ENCODE measurements at regions of chr15 and their contacts with region 1.

Region 1: DNA sequence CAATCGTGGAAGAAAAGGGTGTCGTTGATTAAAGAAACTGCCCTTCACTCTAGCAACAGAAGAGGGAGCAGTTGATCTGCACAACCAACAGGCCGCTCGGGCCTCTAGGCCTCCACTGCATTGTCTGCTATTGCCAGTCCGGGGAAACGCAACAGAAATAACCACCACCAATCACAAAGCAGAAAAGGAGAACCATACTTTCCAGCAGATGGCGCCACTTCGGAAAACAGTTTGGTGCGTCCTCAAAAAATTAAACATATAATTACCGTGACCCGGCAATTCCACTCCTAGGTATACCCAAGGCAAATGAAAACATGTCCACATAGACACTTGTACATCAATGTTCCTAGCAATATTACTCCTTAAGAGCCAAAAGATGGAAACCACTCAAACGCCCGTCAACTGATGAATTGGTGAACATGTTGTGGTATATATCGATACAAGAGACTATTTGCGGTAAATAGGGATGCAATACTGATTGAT is 154.1 kb downstream of the TJP1 start:
- DNase-seq: peak; percentile 86 to 97
- ATAC-seq: peak; percentile 61 to 74
- H3K4me3 ChIP-seq: no peak overlapping the region
- H3K27ac ChIP-seq: peak overlapping the region; percentile 91 to 93
- H3K4me1 ChIP-seq: peaks cover 38% of the 10 kb centered on the region
- CTCF ChIP-seq: peak; percentile 100
- EP300 ChIP-seq: no peak
- POLR2A ChIP-seq: no peak
- RAD21 ChIP-seq: peak; percentile 99

Region 2: GRCh38 chr15:29596266-29596665 is 71.9 kb before region 1 on chr15:
- CTCF ChIA-PET with region 1: no interaction called
- POLR2A ChIA-PET with region 1: no interaction called
- DNase-seq: no peak
- ATAC-seq: no peak
- H3K4me3 ChIP-seq: no peak overlapping the region
- H3K27ac ChIP-seq: no peak overlapping the region
- H3K4me1 ChIP-seq: no peaks in the 10 kb centered on the region
- CTCF ChIP-seq: no peak
- EP300 ChIP-seq: no peak
- POLR2A ChIP-seq: no peak
- RAD21 ChIP-seq: no peak

Region 3: DNA sequence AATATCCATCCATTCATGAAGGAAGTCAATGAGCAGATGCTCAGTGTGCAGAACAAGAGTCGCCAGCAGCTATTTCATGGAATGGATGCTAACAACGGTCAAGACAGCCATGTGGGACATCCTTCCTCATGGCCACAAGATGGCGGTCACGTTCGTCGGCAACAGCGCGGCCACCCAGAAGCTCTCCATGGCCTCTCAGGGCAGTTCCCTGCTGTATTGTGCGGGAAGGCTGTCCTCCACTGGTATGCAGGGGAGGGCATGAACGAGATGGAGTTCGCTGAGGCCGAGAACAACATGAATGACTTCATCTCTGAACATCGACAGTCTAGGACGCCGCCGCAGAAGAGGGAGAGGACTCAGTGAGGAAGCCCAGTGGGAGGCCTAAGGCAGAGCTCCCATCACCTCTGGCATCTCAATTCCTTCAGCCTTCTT is 54.2 kb before region 1 on chr15:
- CTCF ChIA-PET with region 1: interaction called, 11 read pairs
- POLR2A ChIA-PET with region 1: no interaction called
- DNase-seq: peak; percentile 78 to 87
- ATAC-seq: peak; percentile 95 to 98
- H3K4me3 ChIP-seq: no peak overlapping the region
- H3K27ac ChIP-seq: peak overlapping the region in 1 of 2 experiments; percentile 27; a peak in 1 of 6 replicates
- H3K4me1 ChIP-seq: peaks cover 9% of the 10 kb centered on the region; the same call in 2 of the 3 replicates
- CTCF ChIP-seq: peak; percentile 72
- EP300 ChIP-seq: no peak
- POLR2A ChIP-seq: no peak
- RAD21 ChIP-seq: peak; percentile 81 to 86

Region 4: DNA sequence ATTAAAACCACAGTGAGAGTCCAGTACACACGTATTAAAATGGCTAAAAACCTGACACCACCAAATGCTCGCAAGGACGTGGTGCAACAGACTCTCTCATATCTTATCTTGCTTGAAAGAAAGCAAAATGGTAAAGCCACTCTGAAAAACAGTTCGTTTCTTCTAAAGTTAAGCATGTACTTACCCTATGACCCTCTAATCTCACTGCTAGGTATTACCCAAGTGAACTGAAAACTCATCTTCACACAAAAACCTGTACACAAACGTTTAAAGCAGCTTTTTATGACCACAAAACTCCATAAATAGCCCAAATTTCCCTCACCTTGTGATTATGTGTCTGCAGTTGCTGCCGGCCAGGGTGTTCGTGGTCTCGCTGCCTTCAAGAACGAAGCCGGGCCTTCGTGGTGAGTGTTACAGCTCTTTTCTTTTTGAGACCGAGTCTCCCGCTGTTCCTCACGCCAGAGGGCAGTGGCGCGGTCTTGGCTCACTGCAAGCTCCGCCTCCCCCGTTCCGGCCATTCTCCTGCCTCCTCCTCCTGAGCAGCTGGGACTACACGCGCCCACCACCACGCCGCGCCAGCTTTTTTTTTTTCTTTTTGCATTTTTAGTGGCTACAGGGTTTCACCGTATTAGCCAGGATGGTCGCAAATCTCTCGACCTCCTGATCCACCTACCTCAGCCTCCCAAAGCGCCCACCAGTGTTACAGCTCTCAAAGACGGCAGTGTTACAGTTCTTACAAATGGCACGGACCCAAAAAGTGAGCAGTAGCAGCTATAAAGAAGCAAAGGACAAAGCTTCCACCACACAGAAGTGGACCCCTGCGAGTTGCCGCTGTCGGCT is 11.3 kb before region 1 on chr15:
- CTCF ChIA-PET with region 1: interaction called, 11 read pairs
- POLR2A ChIA-PET with region 1: no interaction called
- DNase-seq: peak; percentile 52 to 87
- ATAC-seq: peak; percentile 97 to 99
- H3K4me3 ChIP-seq: peak overlapping the region; percentile 50
- H3K27ac ChIP-seq: peak overlapping the region; percentile 67 to 81
- H3K4me1 ChIP-seq: no peaks in the 10 kb centered on the region
- CTCF ChIP-seq: peak; percentile 48
- EP300 ChIP-seq: no peak
- POLR2A ChIP-seq: peak; percentile 17; the same call in 1 of the 2 replicates
- RAD21 ChIP-seq: peak; percentile 13 to 42; a peak in 1 of 5 replicates

Region 5: GRCh38 chr15:29740692-29741311 is 72.6 kb after region 1 on chr15:
- CTCF ChIA-PET with region 1: interaction called, 68 read pairs
- POLR2A ChIA-PET with region 1: interaction called, 7 read pairs
- DNase-seq: peak in 1 of 2 experiments; percentile 61
- ATAC-seq: peak; percentile 47 to 60; a peak in 3 of 6 replicates
- H3K4me3 ChIP-seq: no peak overlapping the region
- H3K27ac ChIP-seq: peak overlapping the region; percentile 22 to 86; a peak in 4 of 6 replicates
- H3K4me1 ChIP-seq: peaks cover 39% of the 10 kb centered on the region
- CTCF ChIP-seq: peak; percentile 83
- EP300 ChIP-seq: no peak
- POLR2A ChIP-seq: no peak
- RAD21 ChIP-seq: peak; percentile 86 to 88

Region 6: DNA sequence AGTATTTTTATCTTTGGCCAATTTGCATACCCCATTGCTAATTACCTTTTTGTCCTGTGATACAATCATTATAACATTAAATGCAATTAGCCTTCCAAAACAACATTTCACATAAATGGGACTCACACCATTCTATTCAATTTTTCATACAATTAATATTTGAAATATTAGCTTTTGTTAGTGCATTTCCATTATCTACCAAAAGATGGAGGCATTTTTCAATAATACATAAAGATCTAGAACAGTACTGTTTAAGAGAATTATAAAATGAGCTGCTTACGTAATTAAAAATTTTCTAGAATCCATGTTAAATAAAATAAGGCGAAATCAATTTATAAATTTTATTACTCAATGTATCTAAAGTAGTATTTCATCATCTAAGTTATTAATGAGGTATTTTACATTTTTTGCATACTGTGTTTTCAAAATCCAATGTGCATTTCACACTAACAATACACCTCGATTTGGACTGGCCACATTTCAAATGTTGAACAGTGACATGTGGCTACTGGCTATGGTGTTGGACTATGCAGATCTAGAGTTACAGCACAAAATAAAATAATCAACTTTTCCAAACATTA is 79.8 kb after region 1 on chr15:
- CTCF ChIA-PET with region 1: interaction called, 35 read pairs
- POLR2A ChIA-PET with region 1: no interaction called
- DNase-seq: peak in 1 of 2 experiments; percentile 31
- ATAC-seq: peak; percentile 44 to 58; a peak in 4 of 6 replicates
- H3K4me3 ChIP-seq: no peak overlapping the region
- H3K27ac ChIP-seq: no peak overlapping the region
- H3K4me1 ChIP-seq: peaks cover 16% of the 10 kb centered on the region; the same call in 2 of the 3 replicates
- CTCF ChIP-seq: peak; percentile 61
- EP300 ChIP-seq: no peak
- POLR2A ChIP-seq: no peak
- RAD21 ChIP-seq: peak; percentile 82 to 83

Region 7: DNA sequence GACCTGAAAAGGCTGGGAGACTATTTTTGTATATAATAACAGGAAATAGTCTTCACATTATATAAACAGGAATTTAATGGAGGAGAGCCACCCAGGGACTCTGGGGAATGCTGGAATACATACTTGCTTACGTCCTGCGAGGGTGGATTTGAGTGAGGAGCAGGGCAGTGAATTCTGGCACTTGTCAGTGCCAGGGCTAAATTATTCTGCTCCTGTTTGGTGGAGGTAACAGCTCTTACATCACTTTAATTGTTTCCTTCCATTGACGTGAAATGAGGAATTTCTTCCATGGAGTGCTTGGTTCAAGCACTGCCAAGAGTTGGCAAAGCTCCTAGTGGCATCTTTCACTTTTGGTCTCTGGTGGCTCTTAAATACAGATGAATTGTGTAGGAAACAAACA is 320.5 kb after region 1 on chr15:
- CTCF ChIA-PET with region 1: interaction called, 10 read pairs
- POLR2A ChIA-PET with region 1: no interaction called
- DNase-seq: no peak
- ATAC-seq: no peak
- H3K4me3 ChIP-seq: no peak overlapping the region
- H3K27ac ChIP-seq: no peak overlapping the region
- H3K4me1 ChIP-seq: no peaks in the 10 kb centered on the region
- CTCF ChIP-seq: no peak
- EP300 ChIP-seq: no peak
- POLR2A ChIP-seq: no peak
- RAD21 ChIP-seq: no peak

Region 8: DNA sequence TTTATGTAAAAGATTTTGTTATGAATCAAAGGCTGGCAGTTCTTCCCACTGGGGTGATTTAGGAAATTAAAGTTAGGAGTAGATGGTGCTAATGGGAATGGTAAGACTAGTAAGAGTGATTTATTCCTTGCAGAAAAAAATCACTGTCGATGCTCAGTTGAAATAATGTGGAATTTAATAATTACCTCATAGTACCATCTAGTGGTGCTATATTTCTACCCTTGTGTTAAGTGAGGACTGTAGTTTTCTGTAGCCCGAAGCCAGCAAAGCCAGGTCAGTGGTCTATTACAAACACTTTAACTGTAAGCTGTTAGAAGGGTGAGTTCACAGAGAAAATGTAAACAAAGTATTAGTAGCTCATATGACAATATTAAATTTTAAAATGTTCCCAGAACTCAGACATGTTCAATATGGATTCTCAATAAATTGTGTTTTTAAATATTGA is 375.1 kb after region 1 on chr15:
- CTCF ChIA-PET with region 1: interaction called, 75 read pairs
- POLR2A ChIA-PET with region 1: no interaction called
- DNase-seq: peak; percentile 37 to 40
- ATAC-seq: peak; percentile 76 to 85; a peak in 5 of 6 replicates
- H3K4me3 ChIP-seq: no peak overlapping the region
- H3K27ac ChIP-seq: no peak overlapping the region
- H3K4me1 ChIP-seq: peaks cover 17% of the 10 kb centered on the region; the same call in 2 of the 3 replicates
- CTCF ChIP-seq: peak; percentile 75
- EP300 ChIP-seq: no peak
- POLR2A ChIP-seq: no peak
- RAD21 ChIP-seq: peak; percentile 77 to 86